Adrenal gland (tissue), 19 donors: ENCODE measurements at regions of chr17 and their contacts with region 1.

Region 1: DNA sequence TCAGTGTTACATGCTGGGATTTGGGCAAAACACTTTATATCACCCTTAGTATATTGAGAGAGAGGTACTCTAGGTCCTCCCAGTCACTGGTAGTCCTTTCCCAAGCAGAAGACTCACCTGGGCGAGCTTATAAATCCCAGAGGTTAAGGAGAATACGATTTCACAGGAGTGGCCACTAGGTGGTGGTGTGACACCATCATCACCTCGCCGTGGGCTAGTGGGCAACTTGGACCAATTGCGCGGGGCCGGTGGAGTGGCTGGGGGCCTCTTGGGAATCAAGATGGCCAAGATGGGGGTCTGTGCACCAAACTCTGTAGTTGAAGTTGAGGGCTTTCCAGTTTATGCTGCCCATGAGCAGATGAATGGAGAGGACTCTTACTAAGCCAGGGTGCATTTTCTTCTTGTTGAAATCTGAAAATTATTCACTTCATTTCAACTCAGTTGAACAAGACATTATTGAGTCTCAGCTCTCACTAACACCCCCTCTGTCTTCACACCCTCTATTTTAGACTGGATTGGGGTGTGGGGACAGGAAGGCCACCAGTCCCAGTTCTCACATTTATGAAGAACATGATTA is 38.2 kb upstream of the PIRT start:
- DNase-seq: peak in 6 of 7 donors; percentile 19 to 59 (median 36)
- H3K4me3 ChIP-seq: no peak overlapping the region
- H3K27ac ChIP-seq: no peak overlapping the region
- H3K4me1 ChIP-seq: no peaks in the 10 kb centered on the region
- H3K27me3 ChIP-seq: no peaks in the 10 kb centered on the region
- CTCF ChIP-seq: peak; percentile 34 to 72 (median 55)
- POLR2A ChIP-seq: no peak

Region 2: GRCh38 chr17:11144358-11145233 is 268.5 kb after region 1 on chr17:
- intact Hi-C with region 1: loop called in 1 of 2 experiments (anchors 5 kb)
- DNase-seq: peak; percentile 42 to 73 (median 55)
- H3K4me3 ChIP-seq: no peak overlapping the region
- H3K27ac ChIP-seq: no peak overlapping the region
- H3K4me1 ChIP-seq: no peaks in the 10 kb centered on the region
- H3K27me3 ChIP-seq: no peaks in the 10 kb centered on the region
- CTCF ChIP-seq: peak; percentile 49 to 69 (median 60)
- POLR2A ChIP-seq: no peak

Region 3: DNA sequence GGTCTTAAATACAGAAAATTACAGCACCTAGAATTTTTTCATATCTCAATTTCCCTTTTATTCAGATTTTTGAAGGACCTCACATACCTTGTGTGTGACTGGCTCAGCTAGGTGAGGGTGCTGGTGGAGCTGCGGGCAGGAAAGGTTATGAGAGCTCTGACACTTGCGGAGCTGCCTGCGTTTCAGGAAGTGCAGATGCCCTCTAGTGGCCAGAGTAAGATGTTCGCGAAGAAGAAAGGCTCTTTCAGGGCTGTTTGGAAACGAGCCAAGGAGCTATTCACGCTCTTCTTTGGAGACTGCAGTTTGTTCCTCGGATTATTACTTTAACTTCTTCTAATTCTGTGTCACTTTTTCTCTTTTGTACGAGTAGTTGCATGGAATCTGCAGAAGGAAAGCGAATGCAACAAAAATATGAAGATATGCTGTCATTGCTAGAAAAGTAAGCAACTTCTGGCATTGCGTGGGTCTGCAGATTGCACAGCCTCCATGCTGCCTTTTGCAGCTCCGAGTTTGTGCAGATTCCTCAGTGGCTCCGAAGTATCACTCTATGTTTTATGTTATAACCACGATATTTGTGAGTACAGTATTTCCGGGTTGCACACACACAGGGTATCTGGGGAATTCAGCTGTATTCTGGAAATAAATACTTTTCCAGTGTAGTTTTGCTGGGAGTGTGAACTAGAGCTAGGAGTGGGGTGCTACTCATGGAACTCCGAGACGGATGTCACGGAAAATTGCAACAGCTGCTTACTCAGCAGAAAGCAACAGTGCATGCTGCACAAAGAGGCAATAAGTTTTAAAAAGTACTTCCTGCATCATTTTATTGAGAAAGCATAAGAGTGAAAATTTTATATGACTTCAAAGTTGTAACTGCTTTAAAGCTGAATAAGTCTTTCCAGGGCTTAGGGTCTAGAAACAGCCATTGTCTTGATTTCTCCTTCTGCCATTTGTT is 768.5 kb after region 1 on chr17:
- intact Hi-C with region 1: loop called in 1 of 2 experiments (anchors 10 kb)
- DNase-seq: peak; percentile 74 to 89 (median 78)
- H3K4me3 ChIP-seq: no peak overlapping the region
- H3K27ac ChIP-seq: no peak overlapping the region
- H3K4me1 ChIP-seq: no peaks in the 10 kb centered on the region
- H3K27me3 ChIP-seq: no peaks in the 10 kb centered on the region
- CTCF ChIP-seq: peak; percentile 68 to 80 (median 73)
- POLR2A ChIP-seq: no peak